ENCODE measurements at regions of chr1 and their contacts with region 1.

Region 1: DNA sequence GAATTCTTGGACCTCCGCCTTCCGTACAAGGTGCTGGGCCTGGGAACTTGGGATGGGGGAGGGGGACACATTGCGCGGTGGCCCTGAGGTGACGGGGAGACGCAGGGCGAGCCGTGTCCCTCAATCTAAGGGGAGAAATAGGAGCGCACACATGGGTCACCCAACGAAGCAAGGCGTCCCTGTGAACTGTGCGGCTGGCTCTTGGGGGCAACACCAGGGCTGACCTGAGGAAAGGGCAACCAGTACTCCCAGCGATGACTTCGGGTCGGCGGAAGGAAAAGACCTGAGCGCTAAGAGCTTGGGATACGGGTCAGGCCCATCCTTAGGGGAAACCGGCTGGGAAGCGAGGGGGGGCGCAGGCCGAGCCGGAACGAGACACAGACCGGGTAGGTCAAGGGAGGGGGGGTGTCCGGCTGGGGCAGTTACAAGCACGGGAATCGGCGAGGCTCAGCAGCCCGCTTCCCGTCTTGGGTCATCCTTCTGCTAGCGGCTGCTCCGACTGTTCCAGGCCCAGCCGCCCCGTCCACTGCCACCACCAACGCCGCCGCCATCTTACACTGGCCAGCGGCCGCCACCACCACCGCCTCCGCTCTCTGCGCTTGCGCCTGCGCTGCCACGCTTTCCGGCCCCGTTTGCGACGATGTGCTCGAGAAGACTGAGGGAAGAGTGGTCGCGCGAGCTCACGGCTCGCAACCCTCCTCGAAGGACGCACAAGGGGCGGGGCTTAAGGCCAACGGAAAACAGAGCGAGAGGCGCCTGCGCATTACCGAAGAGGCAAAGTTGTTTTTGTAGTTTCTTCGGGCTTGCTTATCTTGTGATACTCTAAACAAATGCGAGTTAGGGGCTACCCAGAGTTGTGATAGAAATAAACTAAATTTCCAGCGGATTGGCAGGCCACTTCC is at the start of gene DCAF8:
- DNase-seq: peak; percentile 96 to 97 (median 96)
- H3K4me3 ChIP-seq: peak within 1 kb of the TSS; percentile 52 to 100 (median 98)
- H3K4me3 Mint-ChIP-seq: peak within 1 kb of the TSS; percentile 97 to 99
- H3K27ac ChIP-seq: peak within 1 kb of the TSS; percentile 91 to 99
- H3K27ac Mint-ChIP-seq: peak within 1 kb of the TSS; percentile 97 to 99 (median 98)
- H3K4me1 ChIP-seq: peaks cover 21 to 23% of the 10 kb centered on the region in 2 donors
- H3K4me1 Mint-ChIP-seq: peaks cover 26% of the 10 kb centered on the region
- H3K27me3 ChIP-seq: no peaks in the 10 kb centered on the region
- H3K27me3 Mint-ChIP-seq: peaks cover 0 to 3% (median 0%) of the 10 kb centered on the region in 3 donors
- CTCF ChIP-seq: no peak
- polyA plus RNA-seq, gene DCAF8: 35.5 to 205 (median 44.6) TPM

Region 2: GRCh38 chr1:160284782-160285344 is 22.7 kb after region 1 on chr1 and contains the start of gene PEX19:
- intact Hi-C with region 1: loop called (anchors 2 kb)
- DNase-seq: peak; percentile 84 to 94 (median 89)
- H3K4me3 ChIP-seq: peak within 1 kb of the TSS; percentile 82 to 90 (median 83)
- H3K4me3 Mint-ChIP-seq: peak within 1 kb of the TSS; percentile 92 to 97
- H3K27ac ChIP-seq: peak within 1 kb of the TSS; percentile 69 to 82
- H3K27ac Mint-ChIP-seq: peak within 1 kb of the TSS; percentile 86 to 96 (median 94)
- H3K4me1 ChIP-seq: peaks cover 19 to 22% of the 10 kb centered on the region in 2 donors
- H3K4me1 Mint-ChIP-seq: peaks cover 20% of the 10 kb centered on the region
- H3K27me3 ChIP-seq: no peaks in the 10 kb centered on the region
- H3K27me3 Mint-ChIP-seq: peaks cover 0 to 7% (median 0%) of the 10 kb centered on the region in 3 donors
- CTCF ChIP-seq: no peak
- polyA plus RNA-seq, gene PEX19: 17.4 to 38.2 (median 37.4) TPM

Measured in CD14-positive monocyte (primary cell).